ENCODE measurements at regions of chr6 and their contacts with region 1.

Region 1: DNA sequence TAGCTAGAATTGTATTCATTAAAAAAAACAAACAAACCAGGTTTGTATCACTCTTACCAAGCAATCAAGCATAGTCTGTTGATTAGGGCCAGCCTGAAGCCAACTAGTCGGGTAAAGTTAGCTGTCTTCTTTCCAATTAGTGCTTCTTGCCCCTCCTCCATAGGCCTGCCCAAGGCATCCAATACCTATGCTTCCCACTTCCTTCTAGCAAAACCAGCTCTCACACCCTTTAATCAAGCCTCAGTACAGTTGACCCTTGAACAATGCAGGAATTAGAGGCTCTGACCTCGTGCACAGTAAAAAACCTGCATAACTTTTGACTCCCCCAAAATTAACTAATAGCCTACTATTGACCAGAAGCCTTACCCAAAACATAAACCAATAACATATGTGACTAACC is 119.1 kb upstream of the DTNBP1 start:
- DNase-seq: no peak
- H3K4me3 Mint-ChIP-seq: no peak overlapping the region
- H3K27ac Mint-ChIP-seq: no peak overlapping the region
- H3K4me1 Mint-ChIP-seq: peaks cover 2% of the 10 kb centered on the region
- H3K27me3 Mint-ChIP-seq: no peaks in the 10 kb centered on the region

Region 2: GRCh38 chr6:15770347-15771143 is 11.3 kb before region 1 on chr6:
- CTCF ChIA-PET with region 1: interaction called, 15 read pairs
- POLR2A ChIA-PET with region 1: no interaction called
- DNase-seq: no peak
- H3K4me3 Mint-ChIP-seq: no peak overlapping the region
- H3K27ac Mint-ChIP-seq: no peak overlapping the region
- H3K4me1 Mint-ChIP-seq: peaks cover 9% of the 10 kb centered on the region
- H3K27me3 Mint-ChIP-seq: no peaks in the 10 kb centered on the region

Region 3: GRCh38 chr6:15800841-15801617 is 19.1 kb after region 1 on chr6:
- CTCF ChIA-PET with region 1: no interaction called
- POLR2A ChIA-PET with region 1: no interaction called
- DNase-seq: no peak
- H3K4me3 Mint-ChIP-seq: no peak overlapping the region
- H3K27ac Mint-ChIP-seq: no peak overlapping the region
- H3K4me1 Mint-ChIP-seq: no peaks in the 10 kb centered on the region
- H3K27me3 Mint-ChIP-seq: no peaks in the 10 kb centered on the region